Head of caudate nucleus (tissue), 42 donors: ENCODE measurements at regions of chr3 and their contacts with region 1.

Region 1: GRCh38 chr3:152452318-152452717 is 183.6 kb downstream of the MBNL1 start:
- DNase-seq: no peak

Region 2: GRCh38 chr3:152268555-152269425 is 183.5 kb before region 1 on chr3 and contains the start of gene MBNL1:
- intact Hi-C with region 1: loop called (anchors 10 kb)
- DNase-seq: peak; percentile 67 to 91 (median 80)

Region 3: DNA sequence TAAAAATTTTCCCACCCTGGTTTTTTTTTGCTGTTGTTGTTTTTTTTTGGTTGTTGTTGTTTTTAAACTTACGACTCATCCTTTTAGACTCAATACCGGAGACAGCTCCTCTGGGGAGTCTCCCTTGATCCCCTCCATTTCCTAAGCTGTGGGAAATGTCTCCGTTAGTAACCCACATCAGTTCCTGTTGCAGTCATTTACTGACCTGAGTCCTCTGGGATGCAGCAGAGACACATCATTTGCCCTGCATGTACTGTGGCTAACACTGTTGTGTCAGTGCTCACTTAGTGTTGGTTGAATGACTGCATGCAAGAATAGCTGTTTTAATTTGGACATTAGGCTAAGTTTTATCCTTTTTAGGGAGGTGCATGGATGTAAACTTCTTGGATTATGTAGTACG is 99.8 kb before region 1 on chr3:
- intact Hi-C with region 1: no loop called
- DNase-seq: no peak

Region 4: GRCh38 chr3:152583963-152584362 is 131.6 kb after region 1 on chr3:
- intact Hi-C with region 1: no loop called
- DNase-seq: no peak

Region 5: DNA sequence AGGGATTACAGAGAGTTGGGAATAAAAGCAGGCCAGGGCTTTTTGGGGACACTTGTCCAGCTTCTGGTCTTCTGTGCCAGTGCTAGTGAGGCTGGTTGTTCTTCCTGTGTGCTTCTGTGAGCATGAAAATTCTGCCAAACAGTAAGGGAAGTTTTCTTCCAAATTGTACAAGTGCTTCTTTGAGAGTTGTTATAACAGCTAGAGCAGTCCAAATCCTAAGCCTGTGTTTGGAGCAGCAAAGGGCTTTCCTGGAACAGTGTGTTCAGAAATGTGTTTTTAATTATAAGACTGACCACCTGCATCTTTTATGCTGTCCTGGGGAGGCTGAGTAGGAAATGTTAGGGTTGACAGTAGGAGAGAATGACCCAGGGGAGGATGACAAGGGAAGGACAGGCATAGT is 159.6 kb after region 1 on chr3:
- intact Hi-C with region 1: no loop called
- DNase-seq: peak in 3 of 42 donors; percentile 10 to 23 (median 22)